Dendritic cell treated with granulocyte-macrophage colony-stimulating factor and Interleukin-4, amounts not matched to agents 40 ng/mL and 50 ng/mL, for 4 days (primary cell): ENCODE measurements at regions of chr12 and their contacts with region 1.

Region 1: GRCh38 chr12:89927226-89927698 is 218.6 kb upstream of the ATP2B1 start:
- H3K4me3 Mint-ChIP-seq: peak overlapping the region; percentile 40
- H3K27ac Mint-ChIP-seq: peak overlapping the region; percentile 83
- H3K4me1 Mint-ChIP-seq: peaks cover 4% of the 10 kb centered on the region
- H3K27me3 Mint-ChIP-seq: no peaks in the 10 kb centered on the region

Region 2: GRCh38 chr12:89179983-89180382 is 747.3 kb before region 1 on chr12:
- intact Hi-C with region 1: no loop called
- H3K4me3 Mint-ChIP-seq: no peak overlapping the region
- H3K27ac Mint-ChIP-seq: peak overlapping the region; percentile 28
- H3K4me1 Mint-ChIP-seq: peaks cover 33% of the 10 kb centered on the region
- H3K27me3 Mint-ChIP-seq: no peaks in the 10 kb centered on the region

Region 3: DNA sequence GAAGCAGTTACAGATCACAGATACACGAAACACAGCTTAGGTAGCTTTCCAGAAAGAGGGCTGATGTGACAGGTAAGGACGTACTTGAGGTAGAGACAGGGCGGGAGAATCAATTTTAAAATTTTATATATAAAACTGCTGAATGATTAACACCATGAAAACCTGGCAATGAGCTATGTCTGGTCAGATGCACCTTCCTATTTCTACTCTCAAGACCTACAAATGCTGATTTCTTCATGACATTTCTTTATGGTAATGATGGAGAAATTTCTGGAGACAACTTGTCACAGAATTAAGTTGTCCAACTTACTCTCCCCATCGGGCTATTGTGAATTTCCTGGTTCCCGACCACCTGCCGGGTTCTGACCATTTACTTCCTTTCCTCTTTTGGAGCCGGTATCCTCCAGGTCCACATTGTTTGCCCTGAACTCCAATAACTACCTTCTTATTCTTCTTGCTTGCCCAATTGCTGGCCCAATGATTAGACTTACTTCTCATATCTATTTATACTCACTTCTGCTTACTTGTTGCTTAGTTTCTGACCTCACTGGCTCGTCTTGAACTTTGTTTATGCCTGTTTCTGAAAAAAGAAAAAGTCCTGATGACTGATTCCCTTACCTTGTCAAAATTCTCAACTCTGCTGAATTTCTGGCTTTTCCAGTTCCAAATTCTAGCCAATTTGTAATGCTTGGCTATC is 205.8 kb before region 1 on chr12:
- intact Hi-C with region 1: loop called (anchors 5 kb)
- H3K4me3 Mint-ChIP-seq: no peak overlapping the region
- H3K27ac Mint-ChIP-seq: peak overlapping the region; percentile 67
- H3K4me1 Mint-ChIP-seq: peaks cover 19% of the 10 kb centered on the region
- H3K27me3 Mint-ChIP-seq: no peaks in the 10 kb centered on the region

Region 4: GRCh38 chr12:89756585-89757321 is 170.5 kb before region 1 on chr12:
- intact Hi-C with region 1: loop called (anchors 1 kb)
- H3K4me3 Mint-ChIP-seq: peak overlapping the region; percentile 14
- H3K27ac Mint-ChIP-seq: peak overlapping the region; percentile 95
- H3K4me1 Mint-ChIP-seq: peaks cover 43% of the 10 kb centered on the region
- H3K27me3 Mint-ChIP-seq: no peaks in the 10 kb centered on the region

Region 5: DNA sequence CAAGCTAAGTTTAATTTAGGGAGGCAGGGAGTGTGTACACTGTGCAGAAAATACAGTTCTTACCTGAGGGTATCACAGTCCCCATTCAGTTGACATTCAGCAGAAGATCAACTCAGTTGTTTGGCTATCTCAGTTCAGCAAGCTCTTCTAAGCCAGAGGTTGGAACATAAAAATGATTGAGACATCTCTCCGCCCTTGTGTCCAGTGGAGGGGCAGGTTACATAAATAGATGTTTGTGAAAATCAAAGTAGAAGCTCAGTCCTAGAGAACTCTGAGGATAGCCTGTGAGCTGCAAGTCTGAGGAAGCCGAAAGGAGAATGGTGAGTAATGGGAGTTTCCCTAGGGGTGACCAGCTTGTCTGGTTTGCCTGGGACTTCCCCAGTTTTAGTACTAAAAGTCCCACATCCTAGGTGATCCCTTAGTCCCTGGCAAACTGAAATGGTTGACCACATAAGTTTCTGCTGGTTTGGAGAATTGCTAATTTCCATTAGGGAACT is 32.8 kb after region 1 on chr12:
- intact Hi-C with region 1: loop called (anchors 5 kb)
- H3K4me3 Mint-ChIP-seq: no peak overlapping the region
- H3K27ac Mint-ChIP-seq: peak overlapping the region; percentile 53
- H3K4me1 Mint-ChIP-seq: peaks cover 15% of the 10 kb centered on the region
- H3K27me3 Mint-ChIP-seq: peaks cover 6% of the 10 kb centered on the region

Region 6: GRCh38 chr12:89980236-89980635 is 53.0 kb after region 1 on chr12:
- intact Hi-C with region 1: no loop called
- H3K4me3 Mint-ChIP-seq: no peak overlapping the region
- H3K27ac Mint-ChIP-seq: peak overlapping the region; percentile 86
- H3K4me1 Mint-ChIP-seq: peaks cover 36% of the 10 kb centered on the region
- H3K27me3 Mint-ChIP-seq: peaks cover 2% of the 10 kb centered on the region

Region 7: DNA sequence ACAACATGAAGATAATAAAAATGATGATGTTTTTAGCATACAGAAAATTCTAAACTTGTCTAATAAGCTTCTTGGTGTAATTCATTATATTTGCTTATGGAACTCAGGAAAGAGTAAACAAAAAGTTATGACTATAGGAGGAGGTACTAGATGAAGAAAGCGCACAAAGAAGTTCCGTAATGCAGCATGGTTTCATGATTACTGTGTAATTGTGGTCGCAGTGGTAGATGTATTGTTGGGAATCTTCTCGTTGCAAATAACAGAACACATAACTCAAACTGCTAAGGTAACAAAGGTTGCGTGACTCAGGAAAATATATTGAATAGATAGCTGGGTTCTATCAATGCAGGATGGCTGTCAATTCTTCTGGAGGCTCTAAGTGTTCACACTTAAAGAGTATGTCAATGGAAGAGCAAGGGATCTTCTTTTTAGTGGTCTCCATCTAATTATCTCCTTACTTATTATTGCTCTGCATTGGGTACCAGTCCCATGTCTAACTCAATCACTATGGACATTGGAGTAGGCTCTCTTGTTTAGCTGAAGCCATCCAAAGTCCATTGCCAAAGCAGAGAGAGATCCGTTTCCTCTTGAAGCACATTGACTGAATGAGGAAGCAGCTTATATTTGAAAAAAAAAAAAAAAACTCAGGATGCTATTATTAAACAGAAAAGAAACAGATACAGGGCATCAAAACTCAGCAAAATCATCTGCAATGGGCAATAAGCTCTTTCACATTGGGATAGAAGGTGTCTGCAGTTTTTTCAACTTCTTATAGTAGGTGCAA is 64.7 kb after region 1 on chr12:
- intact Hi-C with region 1: no loop called
- H3K4me3 Mint-ChIP-seq: no peak overlapping the region
- H3K27ac Mint-ChIP-seq: peak overlapping the region; percentile 41
- H3K4me1 Mint-ChIP-seq: peaks cover 30% of the 10 kb centered on the region
- H3K27me3 Mint-ChIP-seq: no peaks in the 10 kb centered on the region

Region 8: DNA sequence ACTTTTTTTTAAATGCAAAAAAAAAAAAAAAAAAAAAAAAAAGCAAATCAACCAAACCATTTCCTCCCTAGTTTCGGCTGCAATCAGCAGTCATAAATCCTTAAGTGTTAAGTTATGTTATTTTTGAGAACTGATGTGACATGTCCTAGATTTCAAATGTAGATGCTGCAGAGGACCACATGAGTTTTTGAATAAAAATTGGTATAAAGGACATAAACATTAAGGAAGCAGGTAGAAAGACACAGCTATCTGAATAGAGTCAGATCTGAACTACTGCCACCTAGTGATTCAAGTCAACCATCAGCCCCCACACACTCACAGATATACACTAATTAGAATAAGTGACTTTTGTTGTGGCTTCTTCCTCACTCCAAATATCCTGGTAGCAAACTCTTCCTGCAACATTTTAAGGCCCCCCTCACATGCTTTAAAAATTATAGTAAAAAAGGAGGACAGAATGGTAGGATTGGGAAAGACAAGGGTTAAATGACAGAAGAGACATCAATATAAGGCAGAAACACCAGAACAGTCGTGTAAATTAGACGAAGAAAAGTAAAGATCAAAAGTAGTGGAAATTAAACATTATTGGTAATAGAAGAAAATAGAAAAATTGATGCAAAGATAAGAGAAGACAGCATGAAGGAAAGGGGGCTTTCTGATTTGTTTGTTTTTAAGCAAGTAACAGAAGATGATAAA is 175.8 kb after region 1 on chr12:
- intact Hi-C with region 1: no loop called
- H3K4me3 Mint-ChIP-seq: no peak overlapping the region
- H3K27ac Mint-ChIP-seq: peak overlapping the region; percentile 35
- H3K4me1 Mint-ChIP-seq: peaks cover 36% of the 10 kb centered on the region
- H3K27me3 Mint-ChIP-seq: peaks cover 6% of the 10 kb centered on the region